IMR-90 (cell line): ENCODE measurements at regions of chr13 and their contacts with region 1.

Region 1: DNA sequence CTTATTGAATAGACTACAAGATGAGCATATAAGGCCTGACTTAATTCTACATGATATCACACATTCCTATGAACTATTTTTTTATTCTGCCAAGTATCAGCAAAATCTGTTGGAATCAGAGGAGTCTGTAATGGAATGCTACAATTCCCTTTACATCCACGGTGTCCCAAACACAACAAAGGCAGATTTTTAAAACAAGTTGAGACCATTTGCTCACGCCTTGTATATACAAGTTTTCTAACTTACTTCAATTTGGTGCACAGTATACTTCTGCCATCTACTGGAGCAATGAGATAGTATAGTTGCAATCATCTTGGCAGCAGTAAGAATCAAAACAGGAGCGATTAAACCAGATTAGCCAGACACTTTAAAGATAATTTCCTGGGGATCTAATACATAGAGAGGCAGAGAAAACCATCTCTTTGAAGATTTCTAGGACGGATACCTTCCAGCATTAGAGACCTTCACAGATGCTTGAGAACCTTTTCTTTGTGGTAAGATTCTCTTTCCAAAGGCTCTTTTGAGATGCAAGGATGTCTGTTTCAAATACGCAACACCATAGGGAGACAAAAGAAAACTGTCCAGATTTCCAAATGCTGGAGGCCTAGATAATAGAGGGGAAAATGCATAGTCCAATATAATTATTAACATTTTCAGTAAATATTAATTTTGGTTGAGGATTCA is 302.0 kb upstream of the MIR17HG start:
- DNase-seq: no peak
- ATAC-seq: no peak
- H3K4me3 ChIP-seq: no peak overlapping the region
- H3K27ac ChIP-seq: no peak overlapping the region
- H3K4me1 ChIP-seq: no peaks in the 10 kb centered on the region
- H3K27me3 ChIP-seq: no peaks in the 10 kb centered on the region
- CTCF ChIP-seq: no peak
- POLR2A ChIP-seq: no peak
- RAD21 ChIP-seq: no peak

Region 2: DNA sequence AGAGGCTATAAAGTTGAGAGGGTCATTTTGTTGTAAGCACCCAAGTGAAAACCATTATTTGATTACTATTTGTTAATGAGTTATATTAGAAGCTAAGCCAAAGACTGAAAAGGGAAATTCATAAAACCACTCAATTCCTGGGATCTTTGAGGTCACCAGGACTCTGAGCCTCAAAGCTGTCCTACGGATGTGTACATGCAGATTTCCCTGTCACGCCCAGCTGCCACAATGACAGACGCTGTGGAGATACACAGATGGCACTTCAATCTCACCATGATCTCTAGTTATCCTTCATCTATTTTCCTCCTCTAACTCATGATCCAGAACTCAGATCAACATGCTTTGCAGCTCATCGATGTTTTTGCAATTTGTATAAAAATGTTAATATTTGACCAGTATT is 101.5 kb before region 1 on chr13:
- CTCF ChIA-PET with region 1: no interaction called
- POLR2A ChIA-PET with region 1: no interaction called
- dilution Hi-C with region 1: no loop called
- in situ Hi-C with region 1: no loop called
- intact Hi-C with region 1: no loop called
- DNase-seq: no peak
- ATAC-seq: no peak
- H3K4me3 ChIP-seq: no peak overlapping the region
- H3K27ac ChIP-seq: no peak overlapping the region
- H3K4me1 ChIP-seq: no peaks in the 10 kb centered on the region
- H3K27me3 ChIP-seq: no peaks in the 10 kb centered on the region
- CTCF ChIP-seq: no peak
- POLR2A ChIP-seq: no peak
- RAD21 ChIP-seq: no peak

Region 3: DNA sequence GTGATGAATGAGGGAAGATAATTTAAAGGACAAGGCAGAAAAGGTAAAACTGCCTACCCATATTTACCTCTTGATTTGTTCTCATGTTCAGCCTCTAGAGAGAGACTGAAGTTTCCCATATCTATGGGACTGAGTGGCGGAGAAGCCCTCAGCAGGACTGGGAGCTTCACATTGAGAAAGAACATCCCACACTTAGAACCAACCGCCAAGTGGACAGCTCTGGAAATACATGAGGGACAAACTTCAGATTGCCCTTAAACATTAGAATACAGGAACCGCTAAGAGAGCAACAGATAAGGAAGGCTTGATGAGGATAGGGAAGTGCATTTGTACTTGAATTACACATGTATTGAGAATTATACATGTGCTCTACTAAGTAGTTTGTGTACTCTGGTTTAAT is 14.0 kb before region 1 on chr13:
- CTCF ChIA-PET with region 1: no interaction called
- POLR2A ChIA-PET with region 1: no interaction called
- dilution Hi-C with region 1: no loop called
- in situ Hi-C with region 1: no loop called
- intact Hi-C with region 1: loop called (anchors 1 kb)
- DNase-seq: no peak
- ATAC-seq: no peak
- H3K4me3 ChIP-seq: no peak overlapping the region
- H3K27ac ChIP-seq: no peak overlapping the region
- H3K4me1 ChIP-seq: no peaks in the 10 kb centered on the region
- H3K27me3 ChIP-seq: no peaks in the 10 kb centered on the region
- CTCF ChIP-seq: no peak
- POLR2A ChIP-seq: no peak
- RAD21 ChIP-seq: no peak